Activated CD4-positive, alpha-beta memory T cell treated with anti-CD3 and anti-CD28 coated beads, Interleukin-2, amount 10 ng/mL, durations not matched to agents 7 days and 5 days (primary cell): ENCODE measurements at regions of chr1 and their contacts with region 1.

Region 1: GRCh38 chr1:201970334-201971159 is 11.9 kb upstream of the RNPEP start:
- DNase-seq: no peak
- H3K4me3 Mint-ChIP-seq: no peak overlapping the region
- H3K27ac Mint-ChIP-seq: no peak overlapping the region
- H3K4me1 Mint-ChIP-seq: peaks cover 1% of the 10 kb centered on the region
- H3K27me3 Mint-ChIP-seq: peaks cover 8% of the 10 kb centered on the region

Region 2: DNA sequence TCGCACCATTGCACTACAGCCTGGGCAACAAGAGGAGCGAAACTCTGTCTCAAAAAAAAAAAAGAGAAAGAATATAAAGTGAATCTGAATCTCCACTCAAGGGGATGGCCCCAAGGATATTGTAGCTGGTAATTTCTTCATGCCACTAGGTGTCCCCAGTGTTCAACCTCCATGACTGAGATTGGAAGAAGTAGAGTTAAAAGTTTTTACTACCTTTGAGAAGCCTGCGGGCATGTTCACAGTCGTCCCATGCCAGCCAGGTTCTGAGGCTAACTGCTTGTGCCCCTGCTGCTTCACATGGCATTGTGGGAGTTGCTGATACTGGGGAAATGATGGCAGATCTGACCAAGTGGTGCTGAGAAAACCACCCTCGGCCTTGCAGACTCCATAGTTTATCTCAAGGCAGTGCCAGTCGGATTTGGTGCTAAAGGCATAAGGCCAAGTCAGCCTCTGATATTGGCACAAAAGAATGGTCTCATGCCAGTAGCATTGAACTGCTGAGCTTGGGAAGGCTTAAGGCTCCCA is 92.6 kb before region 1 on chr1:
- CTCF ChIA-PET with region 1: interaction called, 15 read pairs
- POLR2A ChIA-PET with region 1: no interaction called
- DNase-seq: no peak
- H3K4me3 Mint-ChIP-seq: no peak overlapping the region
- H3K27ac Mint-ChIP-seq: no peak overlapping the region
- H3K4me1 Mint-ChIP-seq: peaks cover 2% of the 10 kb centered on the region
- H3K27me3 Mint-ChIP-seq: no peaks in the 10 kb centered on the region

Region 3: GRCh38 chr1:201982623-201983379 is 12.3 kb after region 1 on chr1 and contains the start of gene RNPEP:
- CTCF ChIA-PET with region 1: interaction called, 11 read pairs
- POLR2A ChIA-PET with region 1: interaction called, 6 read pairs
- DNase-seq: peak; percentile 57
- H3K4me3 Mint-ChIP-seq: peak within 1 kb of the TSS; percentile 97
- H3K27ac Mint-ChIP-seq: peak within 1 kb of the TSS; percentile 74
- H3K4me1 Mint-ChIP-seq: peaks cover 28% of the 10 kb centered on the region
- H3K27me3 Mint-ChIP-seq: no peaks in the 10 kb centered on the region
- total RNA-seq, gene RNPEP: 38.5 to 41.1 TPM

Region 4: GRCh38 chr1:201999625-202000238 is 29.2 kb after region 1 on chr1:
- CTCF ChIA-PET with region 1: interaction called, 10 read pairs
- POLR2A ChIA-PET with region 1: no interaction called
- DNase-seq: peak; percentile 31
- H3K4me3 Mint-ChIP-seq: no peak overlapping the region
- H3K27ac Mint-ChIP-seq: no peak overlapping the region
- H3K4me1 Mint-ChIP-seq: no peaks in the 10 kb centered on the region
- H3K27me3 Mint-ChIP-seq: no peaks in the 10 kb centered on the region

Region 5: DNA sequence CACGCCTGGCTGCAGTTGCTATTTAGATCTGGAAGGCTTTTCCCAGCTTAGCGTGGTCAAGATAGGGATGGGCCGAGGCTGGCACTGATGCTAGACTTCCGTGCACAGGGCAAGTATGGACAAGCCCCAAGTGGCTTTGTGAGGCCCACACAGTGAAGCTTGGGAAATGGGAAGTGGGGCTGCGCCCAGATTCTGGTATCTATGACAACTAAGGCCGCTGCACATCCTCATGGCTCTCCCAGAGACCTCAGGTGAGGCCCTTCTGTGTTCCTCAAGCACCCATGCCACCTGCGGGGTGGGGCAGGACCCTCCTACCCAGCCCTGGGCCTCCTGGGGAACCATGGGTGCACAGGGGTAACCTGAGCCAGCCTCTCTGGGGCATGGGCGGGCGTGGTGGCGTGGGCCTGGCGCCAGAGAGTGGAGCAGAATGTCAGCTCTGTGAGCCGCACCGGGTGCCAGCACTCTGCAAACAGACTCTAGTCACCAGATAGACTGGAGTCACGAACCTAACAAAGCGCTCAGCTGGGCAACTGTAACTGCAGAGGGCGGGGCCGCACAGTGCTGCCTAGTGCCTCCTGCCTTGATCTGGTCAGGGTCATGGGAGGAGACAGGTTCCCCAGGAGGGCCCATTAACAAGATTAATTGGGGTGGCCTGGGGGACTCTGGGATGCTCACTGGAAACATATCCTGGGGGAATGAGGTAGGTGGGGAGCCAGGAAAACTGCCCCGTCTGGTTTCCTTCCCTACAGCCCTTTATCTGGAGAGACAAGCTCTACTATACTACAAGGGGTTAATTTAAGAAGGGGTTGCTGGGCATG is 86.3 kb after region 1 on chr1:
- CTCF ChIA-PET with region 1: no interaction called
- POLR2A ChIA-PET with region 1: no interaction called
- DNase-seq: no peak
- H3K4me3 Mint-ChIP-seq: no peak overlapping the region
- H3K27ac Mint-ChIP-seq: no peak overlapping the region
- H3K4me1 Mint-ChIP-seq: no peaks in the 10 kb centered on the region
- H3K27me3 Mint-ChIP-seq: peaks cover 8% of the 10 kb centered on the region